Right cardiac atrium (tissue), 5 donors: ENCODE measurements at regions of chr3 and their contacts with region 1.

Region 1: GRCh38 chr3:154252759-154253638 is 71.3 kb downstream of the DHX36 start:
- DNase-seq: peak; percentile 92 to 97 (median 95)
- ATAC-seq: peak; percentile 93 to 95
- H3K4me3 ChIP-seq: no peak overlapping the region
- H3K27ac ChIP-seq: no peak overlapping the region
- H3K4me1 ChIP-seq: no peaks in the 10 kb centered on the region
- H3K27me3 ChIP-seq: no peaks in the 10 kb centered on the region

Region 2: GRCh38 chr3:154018100-154018696 is 234.8 kb before region 1 on chr3:
- intact Hi-C with region 1: no loop called
- DNase-seq: peak; percentile 11 to 45 (median 25)
- ATAC-seq: no peak
- H3K4me3 ChIP-seq: no peak overlapping the region
- H3K27ac ChIP-seq: no peak overlapping the region
- H3K4me1 ChIP-seq: no peaks in the 10 kb centered on the region
- H3K27me3 ChIP-seq: no peaks in the 10 kb centered on the region

Region 3: GRCh38 chr3:154095832-154096421 is 157.1 kb before region 1 on chr3:
- intact Hi-C with region 1: loop called in 3 of 4 experiments (anchors 5 to 10 kb)
- DNase-seq: no peak
- ATAC-seq: no peak
- H3K4me3 ChIP-seq: no peak overlapping the region
- H3K27ac ChIP-seq: no peak overlapping the region
- H3K4me1 ChIP-seq: no peaks in the 10 kb centered on the region
- H3K27me3 ChIP-seq: no peaks in the 10 kb centered on the region

Region 4: GRCh38 chr3:154120961-154121700 is 131.9 kb before region 1 on chr3 and contains the start of gene ARHGEF26:
- intact Hi-C with region 1: loop called in 2 of 4 experiments (anchors 10 kb)
- DNase-seq: peak; percentile 87 to 95 (median 95)
- ATAC-seq: peak; percentile 97 to 98
- H3K4me3 ChIP-seq: peak within 1 kb of the TSS; percentile 63
- H3K27ac ChIP-seq: no peak within 1 kb of the TSS
- H3K4me1 ChIP-seq: no peaks in the 10 kb centered on the region
- H3K27me3 ChIP-seq: no peaks in the 10 kb centered on the region
- total RNA-seq, gene ARHGEF26: 3.3 to 7.5 (median 5.4) TPM

Region 5: DNA sequence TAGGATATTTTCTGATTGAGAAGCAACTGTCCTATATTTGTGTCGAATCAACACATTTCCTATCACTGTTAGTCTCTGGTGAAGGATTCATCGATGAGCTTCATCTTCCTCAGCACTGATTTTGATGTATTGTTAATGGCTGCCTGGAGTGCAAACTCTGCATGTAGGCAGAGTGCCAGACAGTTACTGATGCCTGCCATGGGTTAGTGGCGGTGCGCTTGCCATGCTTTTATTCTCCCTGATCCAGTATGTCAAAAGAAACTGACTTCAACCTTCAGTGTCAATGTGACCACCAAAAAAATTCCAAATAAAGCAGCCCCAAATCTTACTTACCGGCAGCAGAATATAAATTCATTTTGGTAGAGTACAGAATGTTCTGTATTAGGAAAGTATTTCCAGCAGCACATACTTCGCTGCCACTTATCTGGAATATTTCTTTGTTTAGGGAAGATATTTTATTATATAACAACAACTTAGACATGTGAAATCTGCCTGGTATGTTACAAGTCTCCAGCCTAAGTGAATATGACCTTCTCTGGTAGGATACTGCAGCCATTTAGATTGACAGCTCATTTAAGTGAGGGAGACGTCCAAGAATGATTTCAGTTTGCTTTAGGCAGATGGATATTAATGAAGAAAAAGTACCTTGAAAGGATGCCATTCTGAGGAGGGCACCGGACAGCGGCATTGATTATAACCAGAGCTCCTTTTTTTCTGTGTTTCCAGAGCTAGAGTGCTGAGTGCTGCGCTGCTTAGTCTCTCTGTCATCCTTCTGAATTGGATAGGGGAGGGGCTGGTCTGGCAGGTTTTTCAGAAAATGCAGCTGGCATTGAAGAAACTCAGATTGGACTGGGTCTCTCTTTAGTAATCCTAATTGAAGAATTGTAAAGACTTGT is 71.9 kb before region 1 on chr3:
- intact Hi-C with region 1: no loop called
- DNase-seq: peak in 1 of 3 donors; percentile 36
- ATAC-seq: peak; percentile 34 to 60
- H3K4me3 ChIP-seq: no peak overlapping the region
- H3K27ac ChIP-seq: no peak overlapping the region
- H3K4me1 ChIP-seq: peaks cover 2% of the 10 kb centered on the region
- H3K27me3 ChIP-seq: no peaks in the 10 kb centered on the region

Region 6: GRCh38 chr3:154428286-154429206 is 175.5 kb after region 1 on chr3:
- intact Hi-C with region 1: no loop called
- DNase-seq: peak in 1 of 3 donors; percentile 12
- ATAC-seq: no peak
- H3K4me3 ChIP-seq: no peak overlapping the region
- H3K27ac ChIP-seq: no peak overlapping the region
- H3K4me1 ChIP-seq: no peaks in the 10 kb centered on the region
- H3K27me3 ChIP-seq: no peaks in the 10 kb centered on the region

Region 7: DNA sequence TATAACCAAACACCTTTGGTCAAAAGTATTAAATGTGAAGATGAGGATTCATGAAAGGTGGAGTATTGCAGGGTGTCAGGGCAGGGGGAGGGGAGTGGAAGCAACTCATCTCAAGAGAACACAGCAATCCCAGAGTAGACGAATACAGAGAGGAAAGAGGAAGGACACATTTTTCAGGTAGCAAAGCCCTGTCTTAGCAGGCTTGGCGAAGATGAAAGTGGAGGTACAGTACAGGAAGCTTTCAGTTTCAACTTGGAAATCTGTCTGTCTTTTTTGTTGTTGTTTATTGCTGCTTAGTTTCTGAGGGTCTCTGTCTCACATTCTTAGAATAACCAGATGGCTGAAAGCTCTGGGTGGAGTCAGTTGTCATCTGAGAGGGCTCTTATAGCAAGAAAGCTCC is 257.8 kb after region 1 on chr3:
- intact Hi-C with region 1: no loop called
- DNase-seq: no peak
- ATAC-seq: no peak
- H3K4me3 ChIP-seq: no peak overlapping the region
- H3K27ac ChIP-seq: no peak overlapping the region
- H3K4me1 ChIP-seq: no peaks in the 10 kb centered on the region
- H3K27me3 ChIP-seq: no peaks in the 10 kb centered on the region